MCF 10A (cell line): ENCODE measurements at regions of chr4 and their contacts with region 1.

Region 1: GRCh38 chr4:158446106-158446505 is 75.6 kb upstream of the RXFP1 start:
- DNase-seq: peak; percentile 90
- H3K4me3 Mint-ChIP-seq: peak overlapping the region; percentile 45
- H3K27ac Mint-ChIP-seq: peak overlapping the region; percentile 93
- H3K4me1 Mint-ChIP-seq: peaks cover 28% of the 10 kb centered on the region
- H3K27me3 Mint-ChIP-seq: no peaks in the 10 kb centered on the region
- CTCF ChIP-seq: no peak

Region 2: GRCh38 chr4:158079661-158080060 is 366.4 kb before region 1 on chr4:
- CTCF ChIA-PET with region 1: no interaction called
- POLR2A ChIA-PET with region 1: no interaction called
- intact Hi-C with region 1: no loop called
- DNase-seq: no peak
- H3K4me3 Mint-ChIP-seq: no peak overlapping the region
- H3K27ac Mint-ChIP-seq: no peak overlapping the region
- H3K4me1 Mint-ChIP-seq: no peaks in the 10 kb centered on the region
- H3K27me3 Mint-ChIP-seq: no peaks in the 10 kb centered on the region
- CTCF ChIP-seq: no peak

Region 3: GRCh38 chr4:158459085-158459820 is 13.1 kb after region 1 on chr4:
- CTCF ChIA-PET with region 1: no interaction called
- POLR2A ChIA-PET with region 1: interaction called, 30 read pairs
- intact Hi-C with region 1: no loop called
- DNase-seq: peak; percentile 46
- H3K4me3 Mint-ChIP-seq: no peak overlapping the region
- H3K27ac Mint-ChIP-seq: peak overlapping the region; percentile 95
- H3K4me1 Mint-ChIP-seq: peaks cover 47% of the 10 kb centered on the region
- H3K27me3 Mint-ChIP-seq: no peaks in the 10 kb centered on the region
- CTCF ChIP-seq: no peak